CD14-positive monocyte (primary cell): ENCODE measurements at regions of chr5 and their contacts with region 1.

Region 1: GRCh38 chr5:139787568-139788293 is 7.9 kb upstream of the PSD2 start:
- DNase-seq: peak; percentile 64 to 78 (median 70)
- H3K4me3 ChIP-seq: peak overlapping the region; percentile 52 to 77 (median 55)
- H3K4me3 Mint-ChIP-seq: peak overlapping the region; percentile 85 to 92
- H3K27ac ChIP-seq: peak overlapping the region in 1 of 2 donors; percentile 6
- H3K27ac Mint-ChIP-seq: peak overlapping the region in 5 of 7 donors; percentile 21 to 86 (median 78)
- H3K4me1 ChIP-seq: peaks cover 0 to 12% of the 10 kb centered on the region in 2 donors
- H3K4me1 Mint-ChIP-seq: peaks cover 7% of the 10 kb centered on the region
- H3K27me3 ChIP-seq: peaks cover 0 to 14% of the 10 kb centered on the region in 2 donors
- H3K27me3 Mint-ChIP-seq: peaks cover 34 to 69% (median 50%) of the 10 kb centered on the region in 3 donors
- CTCF ChIP-seq: peak; percentile 98

Region 2: GRCh38 chr5:139371482-139372435 is 416.0 kb before region 1 on chr5:
- intact Hi-C with region 1: no loop called
- DNase-seq: no peak
- H3K4me3 ChIP-seq: no peak overlapping the region
- H3K4me3 Mint-ChIP-seq: no peak overlapping the region
- H3K27ac ChIP-seq: no peak overlapping the region
- H3K27ac Mint-ChIP-seq: peak overlapping the region in 1 of 7 donors; percentile 42
- H3K4me1 ChIP-seq: no peaks in the 10 kb centered on the region
- H3K4me1 Mint-ChIP-seq: no peaks in the 10 kb centered on the region
- H3K27me3 ChIP-seq: no peaks in the 10 kb centered on the region
- H3K27me3 Mint-ChIP-seq: no peaks in the 10 kb centered on the region
- CTCF ChIP-seq: no peak

Region 3: GRCh38 chr5:139593716-139594319 is 193.9 kb before region 1 on chr5:
- intact Hi-C with region 1: no loop called
- DNase-seq: no peak
- H3K4me3 ChIP-seq: no peak overlapping the region
- H3K4me3 Mint-ChIP-seq: no peak overlapping the region
- H3K27ac ChIP-seq: peak overlapping the region in 1 of 2 donors; percentile 6
- H3K27ac Mint-ChIP-seq: peak overlapping the region in 1 of 7 donors; percentile 21
- H3K4me1 ChIP-seq: peaks cover 21 to 22% of the 10 kb centered on the region in 2 donors
- H3K4me1 Mint-ChIP-seq: peaks cover 30% of the 10 kb centered on the region
- H3K27me3 ChIP-seq: no peaks in the 10 kb centered on the region
- H3K27me3 Mint-ChIP-seq: no peaks in the 10 kb centered on the region
- CTCF ChIP-seq: no peak

Region 4: DNA sequence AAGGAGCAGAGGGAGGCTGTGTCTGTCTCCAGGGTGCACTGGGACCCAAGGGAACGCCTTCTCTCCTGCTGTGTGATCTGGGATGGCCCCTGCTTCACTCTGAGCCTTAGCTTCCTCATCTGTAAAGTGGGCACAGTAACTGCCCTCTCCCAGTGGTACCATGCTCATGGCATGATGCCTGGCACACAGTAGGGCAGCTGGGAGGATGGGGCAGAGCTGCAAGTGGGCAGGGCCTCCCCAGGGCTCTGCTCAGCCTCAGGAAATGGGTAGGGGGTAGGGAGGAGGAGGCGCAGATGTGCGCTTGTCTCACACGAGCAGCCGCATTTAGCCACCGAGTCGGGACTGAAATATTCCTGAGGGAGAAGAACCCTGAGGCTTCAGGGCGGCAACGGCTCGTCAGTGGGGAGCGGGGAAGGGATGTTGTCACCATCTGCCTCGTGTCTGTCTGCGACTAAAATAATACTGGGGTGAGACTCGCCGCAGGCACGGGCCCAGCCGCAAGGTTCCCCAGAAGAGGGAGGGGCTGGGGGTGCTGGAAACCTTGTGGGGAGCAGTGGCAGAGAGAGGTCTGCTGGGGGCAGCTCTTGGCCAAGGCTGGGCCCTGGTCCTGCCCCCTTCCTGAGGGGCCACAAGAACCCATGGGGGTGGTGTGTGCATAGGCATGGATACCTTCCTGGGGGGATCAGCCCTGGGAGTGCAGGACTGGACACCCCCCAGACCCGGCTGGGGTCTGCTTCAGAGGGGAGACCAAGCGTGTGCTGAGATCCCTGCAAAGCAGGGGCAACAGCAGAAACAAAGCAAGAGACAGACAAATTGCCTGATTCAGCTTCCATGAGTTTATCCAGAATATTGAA is 47.4 kb before region 1 on chr5:
- intact Hi-C with region 1: no loop called
- DNase-seq: no peak
- H3K4me3 ChIP-seq: no peak overlapping the region
- H3K4me3 Mint-ChIP-seq: no peak overlapping the region
- H3K27ac ChIP-seq: no peak overlapping the region
- H3K27ac Mint-ChIP-seq: no peak overlapping the region
- H3K4me1 ChIP-seq: peaks cover 0 to under 1% of the 10 kb centered on the region in 2 donors
- H3K4me1 Mint-ChIP-seq: no peaks in the 10 kb centered on the region
- H3K27me3 ChIP-seq: peaks cover 3 to 12% of the 10 kb centered on the region in 2 donors
- H3K27me3 Mint-ChIP-seq: peaks cover 16 to 22% (median 17%) of the 10 kb centered on the region in 3 donors
- CTCF ChIP-seq: no peak

Region 5: GRCh38 chr5:139837631-139838422 is 50.1 kb after region 1 on chr5:
- intact Hi-C with region 1: loop called in 1 of 2 experiments (anchors 5 kb)
- DNase-seq: no peak
- H3K4me3 ChIP-seq: no peak overlapping the region
- H3K4me3 Mint-ChIP-seq: no peak overlapping the region
- H3K27ac ChIP-seq: no peak overlapping the region
- H3K27ac Mint-ChIP-seq: no peak overlapping the region
- H3K4me1 ChIP-seq: no peaks in the 10 kb centered on the region
- H3K4me1 Mint-ChIP-seq: no peaks in the 10 kb centered on the region
- H3K27me3 ChIP-seq: peaks cover 0 to 3% of the 10 kb centered on the region in 2 donors
- H3K27me3 Mint-ChIP-seq: peaks cover 6 to 20% (median 14%) of the 10 kb centered on the region in 3 donors
- CTCF ChIP-seq: no peak

Region 6: DNA sequence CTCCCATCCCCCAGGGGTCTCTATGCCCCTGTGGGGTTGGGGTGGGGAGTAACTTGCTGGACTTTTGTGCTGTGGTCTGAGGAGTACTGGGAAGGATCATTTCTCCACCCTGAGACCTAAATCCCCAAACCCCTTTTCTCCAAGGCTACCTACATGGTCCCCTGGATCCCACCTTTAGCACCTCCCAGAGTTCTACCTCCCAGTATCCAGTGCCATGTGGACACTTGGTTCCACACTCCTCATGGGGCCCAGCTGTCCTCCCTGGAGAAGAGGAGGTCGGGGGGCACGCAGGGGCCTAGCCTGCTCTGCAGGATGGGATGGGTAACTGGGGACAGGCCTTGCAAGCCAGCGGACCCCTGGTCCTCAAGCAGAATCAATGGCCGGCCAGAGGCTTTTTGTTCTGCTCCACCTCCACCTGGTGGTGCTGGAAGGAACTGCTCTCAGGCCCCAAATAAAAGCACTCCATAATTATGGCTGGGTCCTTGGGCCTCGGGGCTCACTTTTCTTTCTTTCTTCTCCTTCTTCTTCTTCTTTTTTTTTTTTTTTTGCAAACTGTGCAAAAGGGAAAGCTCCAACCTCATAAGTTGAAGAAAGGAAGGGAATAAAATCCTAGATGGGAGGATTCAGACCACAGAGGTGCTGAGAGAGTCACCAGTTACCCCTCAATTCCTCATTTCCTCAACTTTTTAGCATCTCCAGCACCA is 76.3 kb after region 1 on chr5:
- intact Hi-C with region 1: loop called (anchors 2 to 5 kb)
- DNase-seq: peak in 2 of 3 donors; percentile 18 to 40
- H3K4me3 ChIP-seq: no peak overlapping the region
- H3K4me3 Mint-ChIP-seq: no peak overlapping the region
- H3K27ac ChIP-seq: no peak overlapping the region
- H3K27ac Mint-ChIP-seq: no peak overlapping the region
- H3K4me1 ChIP-seq: no peaks in the 10 kb centered on the region
- H3K4me1 Mint-ChIP-seq: peaks cover 2% of the 10 kb centered on the region
- H3K27me3 ChIP-seq: no peaks in the 10 kb centered on the region
- H3K27me3 Mint-ChIP-seq: peaks cover 6 to 14% (median 13%) of the 10 kb centered on the region in 3 donors
- CTCF ChIP-seq: peak; percentile 90

Region 7: DNA sequence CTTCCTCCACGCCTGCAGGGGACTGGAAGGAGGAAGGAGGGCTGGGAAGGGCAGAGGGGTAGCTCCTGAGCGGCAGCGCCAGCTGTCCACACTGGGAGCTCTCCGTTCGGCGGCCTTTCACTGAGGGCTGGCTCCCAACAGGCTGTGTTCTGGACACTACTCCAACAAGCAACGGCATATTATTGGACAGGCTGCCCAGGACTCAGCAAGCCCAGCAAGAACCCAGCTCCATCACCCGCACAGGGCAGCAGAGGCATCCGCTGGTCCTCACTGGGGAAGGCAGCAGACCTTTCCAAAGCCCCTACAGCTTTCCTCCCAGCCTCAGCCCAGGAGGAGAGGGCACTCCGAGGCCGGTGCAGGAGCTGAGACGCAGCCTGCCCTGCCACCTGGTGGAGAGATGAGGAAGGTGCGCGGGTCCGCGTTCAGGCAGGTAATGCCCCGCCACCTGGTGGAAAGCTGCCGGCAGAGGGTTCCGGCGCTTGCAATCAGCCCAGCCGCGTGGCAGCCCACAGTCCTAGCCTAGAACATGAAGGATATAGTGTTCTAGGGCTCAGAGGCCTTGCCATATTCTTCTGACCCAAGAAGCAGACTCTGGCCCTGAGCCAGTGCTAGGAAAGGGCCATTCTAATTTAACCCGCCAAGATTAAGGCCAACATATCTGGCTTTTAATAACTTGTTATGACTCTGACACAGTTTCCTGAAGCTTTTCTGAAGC is 181.0 kb after region 1 on chr5:
- intact Hi-C with region 1: loop called (anchors 2 kb)
- DNase-seq: peak; percentile 70 to 74 (median 72)
- H3K4me3 ChIP-seq: no peak overlapping the region
- H3K4me3 Mint-ChIP-seq: no peak overlapping the region
- H3K27ac ChIP-seq: no peak overlapping the region
- H3K27ac Mint-ChIP-seq: no peak overlapping the region
- H3K4me1 ChIP-seq: no peaks in the 10 kb centered on the region
- H3K4me1 Mint-ChIP-seq: peaks cover 4% of the 10 kb centered on the region
- H3K27me3 ChIP-seq: peaks cover 5 to 7% of the 10 kb centered on the region in 2 donors
- H3K27me3 Mint-ChIP-seq: peaks cover 13 to 30% (median 17%) of the 10 kb centered on the region in 3 donors
- CTCF ChIP-seq: peak; percentile 100

Region 8: DNA sequence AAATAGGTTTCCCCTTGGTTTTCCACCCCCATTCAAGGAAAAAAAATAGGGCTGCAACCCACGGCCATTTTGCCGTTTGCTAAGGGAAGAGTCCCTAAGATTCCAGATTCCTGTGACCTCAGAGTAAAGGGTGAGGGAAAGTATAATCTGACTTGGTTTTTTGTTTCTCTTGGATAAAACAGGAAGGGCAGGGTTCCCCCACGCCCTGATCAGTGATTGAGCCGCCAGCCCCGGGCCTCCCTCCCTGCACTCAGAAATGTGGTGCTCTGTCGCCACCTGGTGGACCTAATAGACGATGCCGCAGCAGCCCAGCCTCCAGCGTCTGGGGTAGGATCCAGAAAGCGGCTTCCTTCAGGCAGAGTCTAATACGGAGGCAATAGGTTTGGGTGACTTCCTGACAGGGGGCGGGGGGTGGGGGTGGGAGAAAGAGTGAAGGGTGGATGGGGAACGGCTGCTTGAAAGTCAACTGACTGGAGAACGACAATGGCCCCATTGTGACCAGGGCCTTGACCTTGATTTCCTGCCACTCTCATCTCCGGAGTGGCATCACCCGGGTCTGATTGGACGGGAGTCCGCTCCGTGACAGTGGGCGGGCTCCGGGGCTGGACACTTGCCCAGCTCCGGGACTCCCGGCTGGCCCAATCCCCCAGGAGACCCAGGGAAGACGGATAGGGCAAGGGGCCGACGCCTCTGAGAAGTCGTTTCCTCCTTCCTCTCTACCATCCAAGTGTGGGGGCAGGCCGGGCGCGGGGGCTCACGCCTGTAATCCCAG is 369.5 kb after region 1 on chr5:
- intact Hi-C with region 1: loop called in 1 of 2 experiments (anchors 10 kb)
- DNase-seq: peak; percentile 75 to 84 (median 83)
- H3K4me3 ChIP-seq: peak overlapping the region in 1 of 3 experiments; percentile 57
- H3K4me3 Mint-ChIP-seq: peak overlapping the region; percentile 45 to 77
- H3K27ac ChIP-seq: no peak overlapping the region
- H3K27ac Mint-ChIP-seq: peak overlapping the region in 1 of 7 donors; percentile 18
- H3K4me1 ChIP-seq: peaks cover 6 to 24% of the 10 kb centered on the region in 2 donors
- H3K4me1 Mint-ChIP-seq: peaks cover 22% of the 10 kb centered on the region
- H3K27me3 ChIP-seq: peaks cover 0 to 3% of the 10 kb centered on the region in 2 donors
- H3K27me3 Mint-ChIP-seq: peaks cover 11 to 28% (median 13%) of the 10 kb centered on the region in 3 donors
- CTCF ChIP-seq: peak; percentile 86

Region 9: DNA sequence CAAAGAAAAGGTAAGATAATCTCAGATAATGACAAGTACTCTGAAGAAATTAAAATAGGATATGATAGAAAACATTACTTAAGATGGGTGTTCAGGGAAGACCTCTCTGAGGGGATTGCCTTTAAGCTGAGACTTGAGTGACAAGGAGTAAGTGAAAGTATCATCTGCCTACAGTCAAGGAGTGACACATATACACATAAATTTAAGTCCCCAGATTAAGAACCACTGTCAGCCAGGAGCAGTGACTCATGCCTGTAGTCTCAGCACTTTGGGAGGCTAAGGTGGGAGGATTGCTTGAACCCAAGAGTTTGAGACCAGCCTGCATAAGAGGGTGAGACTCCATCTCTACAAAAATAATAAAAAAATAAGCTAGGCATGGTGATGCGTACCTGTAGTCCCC is 594.2 kb after region 1 on chr5:
- intact Hi-C with region 1: no loop called
- DNase-seq: no peak
- H3K4me3 ChIP-seq: no peak overlapping the region
- H3K4me3 Mint-ChIP-seq: no peak overlapping the region
- H3K27ac ChIP-seq: no peak overlapping the region
- H3K27ac Mint-ChIP-seq: no peak overlapping the region
- H3K4me1 ChIP-seq: peaks cover 0 to 6% of the 10 kb centered on the region in 2 donors
- H3K4me1 Mint-ChIP-seq: peaks cover 5% of the 10 kb centered on the region
- H3K27me3 ChIP-seq: no peaks in the 10 kb centered on the region
- H3K27me3 Mint-ChIP-seq: no peaks in the 10 kb centered on the region
- CTCF ChIP-seq: no peak